OCI-LY7 (cell line): ENCODE measurements at regions of chr13 and their contacts with region 1.

Region 1: DNA sequence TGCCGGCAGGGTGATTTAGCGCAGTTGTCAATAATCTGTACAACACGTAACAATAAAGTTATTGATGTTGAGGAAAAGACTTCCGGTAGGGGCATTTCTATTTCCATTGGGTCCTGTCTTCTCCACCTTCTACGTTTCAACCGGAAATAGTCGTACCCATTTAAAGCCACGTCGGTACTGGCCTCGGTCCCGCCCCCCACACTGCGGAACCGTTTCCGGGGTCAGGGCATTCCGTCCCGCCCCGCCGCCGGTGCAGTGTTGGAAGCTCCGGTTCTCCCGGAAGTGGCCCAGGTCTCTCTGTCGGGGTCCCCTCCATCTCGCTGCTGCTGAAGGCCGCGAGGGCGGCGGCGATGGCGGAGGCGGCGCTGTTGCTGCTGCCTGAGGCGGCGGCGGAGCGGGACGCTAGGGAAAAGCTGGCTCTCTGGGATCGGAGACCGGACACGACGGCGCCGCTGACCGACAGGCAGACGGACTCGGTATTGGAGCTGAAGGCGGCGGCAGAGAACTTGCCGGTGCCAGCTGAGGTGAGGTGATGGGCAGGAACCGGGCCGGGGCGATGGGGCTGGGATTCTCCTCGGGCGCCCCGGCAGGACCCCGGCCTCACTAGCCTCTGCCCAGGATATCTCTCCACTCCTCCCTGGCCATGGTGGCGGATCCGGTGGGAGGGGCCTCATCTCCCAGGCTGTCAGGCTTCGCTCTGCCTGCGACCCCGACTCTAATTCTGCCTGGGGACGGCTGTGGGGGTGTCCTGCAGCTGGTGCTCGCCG is at the start of gene COG3:
- DNase-seq: peak; percentile 97
- H3K4me3 ChIP-seq: peak within 1 kb of the TSS; percentile 97
- H3K27ac ChIP-seq: peak within 1 kb of the TSS; percentile 53
- H3K4me1 ChIP-seq: peaks cover 23% of the 10 kb centered on the region
- CTCF ChIP-seq: peak; percentile 11; the same call in 1 of the 2 replicates
- total RNA-seq, gene COG3: 28.9 and 50.5 TPM in 2 replicates

Region 2: DNA sequence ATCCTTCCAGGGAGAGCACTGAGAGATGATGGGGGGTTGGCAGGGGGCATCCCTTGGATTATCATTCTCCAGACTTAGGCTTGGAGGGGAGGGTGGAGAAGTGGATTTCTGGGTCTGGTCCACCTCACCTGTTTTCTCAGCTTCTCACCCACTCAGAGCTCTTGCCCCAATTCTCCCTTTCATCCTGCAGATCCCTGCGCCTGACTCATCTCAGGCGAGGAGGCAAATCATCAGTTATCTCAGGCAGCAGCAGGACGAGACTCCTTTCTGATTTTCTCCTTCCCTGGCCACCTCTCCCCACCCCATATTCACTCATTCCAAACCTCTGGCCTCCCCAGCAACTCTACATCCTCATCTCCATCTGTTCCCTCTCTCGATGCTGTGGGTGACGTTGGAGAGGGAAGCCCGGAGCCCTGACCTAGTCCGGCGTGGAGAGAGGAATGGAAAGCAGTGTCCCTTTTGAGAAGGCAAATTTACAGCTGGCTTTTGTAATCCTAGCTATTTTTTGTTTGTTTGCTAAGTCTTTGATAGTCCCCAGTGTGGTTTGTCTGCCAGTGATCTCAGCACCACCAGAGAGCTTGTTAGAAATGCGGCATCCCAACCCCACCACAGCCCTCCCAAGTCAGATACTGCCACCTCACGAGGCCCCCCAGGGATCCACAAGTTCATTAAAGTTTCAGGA is 99.9 kb before region 1 on chr13:
- CTCF ChIA-PET with region 1: no interaction called
- POLR2A ChIA-PET with region 1: interaction called, 10 read pairs
- intact Hi-C with region 1: no loop called
- DNase-seq: no peak
- H3K4me3 ChIP-seq: no peak overlapping the region
- H3K27ac ChIP-seq: no peak overlapping the region
- H3K4me1 ChIP-seq: peaks cover 18% of the 10 kb centered on the region
- CTCF ChIP-seq: no peak

Region 3: GRCh38 chr13:45417790-45418534 is 46.9 kb before region 1 on chr13 and contains the start of gene SLC25A30:
- CTCF ChIA-PET with region 1: no interaction called
- POLR2A ChIA-PET with region 1: interaction called, 3 read pairs
- intact Hi-C with region 1: loop called (anchors 5 kb)
- DNase-seq: peak; percentile 32
- H3K4me3 ChIP-seq: peak within 1 kb of the TSS; percentile 60
- H3K27ac ChIP-seq: no peak within 1 kb of the TSS
- H3K4me1 ChIP-seq: peaks cover 20% of the 10 kb centered on the region
- CTCF ChIP-seq: no peak
- total RNA-seq, gene SLC25A30: 0.46 and 1.5 TPM in 2 replicates